WTC11 (cell line): ENCODE measurements at regions of chr11 and their contacts with region 1.

Region 1: GRCh38 chr11:3412837-3413236 is 33.9 kb upstream of the ZNF195 start:
- DNase-seq: no peak
- ATAC-seq: no peak
- H3K4me3 Mint-ChIP-seq: no peak overlapping the region
- H3K27ac Mint-ChIP-seq: no peak overlapping the region
- H3K4me1 Mint-ChIP-seq: peaks cover 10% of the 10 kb centered on the region
- H3K27me3 Mint-ChIP-seq: no peaks in the 10 kb centered on the region
- CTCF ChIP-seq: no peak

Region 2: DNA sequence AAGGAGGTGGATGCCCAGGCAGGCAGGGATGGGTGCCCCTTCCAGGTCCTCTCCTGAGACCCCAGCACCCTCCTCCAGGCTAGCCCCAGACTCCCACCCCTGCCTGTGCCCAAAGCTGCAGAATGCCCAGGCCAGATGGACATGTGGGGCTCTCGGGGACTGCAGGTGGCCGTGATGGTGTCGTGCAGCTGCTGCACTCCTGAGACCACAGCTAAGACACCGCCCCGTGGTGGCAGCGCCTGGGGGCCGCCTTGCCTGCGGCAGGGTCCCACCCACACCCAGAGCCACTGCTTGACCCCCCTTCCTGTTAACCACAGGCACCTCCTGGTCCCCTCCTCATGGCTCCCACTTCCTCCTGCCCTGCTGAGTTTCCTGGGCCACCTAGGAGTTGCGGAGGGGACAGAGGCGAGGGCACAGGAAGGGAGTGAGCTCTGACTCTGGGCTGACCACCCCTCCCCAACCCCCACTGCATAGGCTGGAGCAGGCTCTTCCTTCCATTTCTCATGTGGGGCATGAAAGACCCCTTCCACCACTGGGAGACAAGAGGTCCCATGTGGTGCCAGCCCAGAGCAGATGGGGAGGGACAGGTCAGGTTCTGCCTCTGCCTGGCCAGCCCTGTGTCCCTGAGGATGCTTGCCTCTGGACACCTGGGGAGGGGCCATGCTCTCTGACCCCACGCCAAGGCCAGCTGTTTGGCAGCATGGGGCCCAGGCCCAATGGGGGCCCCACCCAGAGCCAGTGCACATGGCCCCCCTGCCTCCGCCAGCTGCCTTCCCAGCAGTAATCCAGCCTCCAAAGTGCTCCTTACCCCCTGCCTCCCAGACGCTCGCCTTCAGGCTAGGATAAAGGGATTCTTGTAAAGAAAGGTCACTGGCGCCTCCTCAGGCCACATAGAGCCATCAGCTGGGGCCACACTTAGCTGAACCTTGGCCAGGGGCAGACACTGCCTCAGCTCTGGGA is 277.1 kb before region 1 on chr11:
- CTCF ChIA-PET with region 1: no interaction called
- POLR2A ChIA-PET with region 1: no interaction called
- DNase-seq: peak; percentile 46
- ATAC-seq: peak; percentile 66
- H3K4me3 Mint-ChIP-seq: no peak overlapping the region
- H3K27ac Mint-ChIP-seq: no peak overlapping the region
- H3K4me1 Mint-ChIP-seq: 0 out of 2 replicates have a peak, but pooled peaks cover 3% of the 10 kb centered on the region
- H3K27me3 Mint-ChIP-seq: no peaks in the 10 kb centered on the region
- CTCF ChIP-seq: no peak

Region 3: DNA sequence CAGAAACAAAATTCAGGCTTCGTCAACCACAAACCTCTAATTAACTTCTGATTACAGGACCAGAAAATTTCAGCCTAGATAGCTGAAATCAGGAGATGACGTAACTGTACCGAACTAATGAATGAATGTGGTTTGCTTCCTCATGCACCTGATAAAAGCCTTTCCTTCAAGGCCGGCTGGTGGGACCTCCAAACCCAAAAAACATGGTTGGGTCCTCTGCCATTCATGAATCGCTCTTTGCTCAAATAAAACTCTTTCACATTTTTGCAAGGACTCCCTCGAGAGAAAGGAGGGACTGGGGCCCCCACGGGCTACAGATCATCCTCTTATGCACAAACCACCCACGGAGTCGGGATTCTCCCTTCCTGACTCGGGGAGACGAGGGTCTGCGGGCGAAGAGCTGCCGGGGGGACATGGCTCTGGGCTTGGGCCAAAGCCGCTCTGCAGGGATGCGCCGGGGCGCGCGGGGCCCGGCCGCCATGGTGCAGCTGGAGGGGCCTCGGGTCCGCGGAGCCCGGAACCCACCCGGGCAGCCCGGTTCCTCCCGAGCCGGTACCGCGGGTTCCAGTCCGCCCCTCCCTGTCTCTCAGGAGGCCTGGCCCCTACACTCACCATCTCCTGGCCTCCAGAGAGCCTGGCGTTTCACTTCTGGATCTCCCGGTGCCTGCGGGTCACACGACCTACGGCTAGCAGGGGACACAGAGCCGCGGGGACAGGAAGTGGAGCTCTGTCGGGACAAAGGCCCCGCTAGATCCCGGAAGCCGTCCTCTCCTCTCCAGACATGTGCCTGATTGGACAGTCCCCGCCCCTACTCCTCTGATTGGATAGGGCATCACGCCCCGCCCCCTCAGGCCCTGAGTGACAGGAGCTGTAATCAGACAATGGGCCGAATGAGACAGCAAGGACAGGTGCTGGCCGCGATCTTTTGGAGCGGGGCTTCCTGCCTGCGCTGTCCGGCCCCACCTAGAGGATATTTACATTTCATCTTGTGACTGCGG is 34.1 kb before region 1 on chr11 and contains the start of gene ZNF195:
- CTCF ChIA-PET with region 1: interaction called, 37 read pairs
- POLR2A ChIA-PET with region 1: interaction called, 3 read pairs
- DNase-seq: peak; percentile 100
- ATAC-seq: peak; percentile 95
- H3K4me3 Mint-ChIP-seq: peak within 1 kb of the TSS; percentile 96
- H3K27ac Mint-ChIP-seq: peak within 1 kb of the TSS; percentile 92
- H3K4me1 Mint-ChIP-seq: peaks cover 73% of the 10 kb centered on the region
- H3K27me3 Mint-ChIP-seq: no peaks in the 10 kb centered on the region; the same call in 1 of the 2 replicates
- CTCF ChIP-seq: no peak
- total RNA-seq, gene ZNF195: 72.7 to 85.5 TPM (median 74.2 TPM) in 3 replicates